Ovary (tissue), 10 donors: ENCODE measurements at regions of chr11 and their contacts with region 1.

Region 1: GRCh38 chr11:127451861-127452260 is 451.3 kb upstream of the KIRREL3 start:
- DNase-seq: peak; percentile 26 to 82 (median 57)
- H3K4me3 ChIP-seq: no peak overlapping the region
- H3K27ac ChIP-seq: no peak overlapping the region
- H3K4me1 ChIP-seq: no peaks in the 10 kb centered on the region
- H3K27me3 ChIP-seq: no peaks in the 10 kb centered on the region
- CTCF ChIP-seq: no peak
- EP300 ChIP-seq: no peak
- POLR2A ChIP-seq: no peak

Region 2: DNA sequence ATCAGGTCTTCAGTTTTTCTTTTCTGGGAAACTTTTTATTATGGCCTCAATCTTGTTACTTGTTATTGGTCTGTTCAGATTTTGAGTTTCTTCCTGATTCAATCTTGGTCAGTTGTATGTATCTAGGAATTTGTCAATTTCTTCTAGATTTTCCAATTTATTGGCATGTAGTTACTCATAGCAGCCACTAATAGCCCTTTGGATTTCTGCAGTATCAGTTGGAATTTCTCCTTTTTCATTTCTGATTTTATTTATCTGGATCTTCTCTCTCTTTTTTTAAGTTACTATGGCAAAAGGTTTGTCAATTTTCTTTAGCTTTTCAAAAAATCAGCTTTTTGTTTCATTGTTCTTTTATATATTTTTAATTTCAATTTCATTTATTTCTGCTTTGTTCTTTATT is 31.7 kb before region 1 on chr11:
- intact Hi-C with region 1: loop called in 1 of 4 experiments (anchors 1 kb)
- DNase-seq: no peak
- H3K4me3 ChIP-seq: no peak overlapping the region
- H3K27ac ChIP-seq: no peak overlapping the region
- H3K4me1 ChIP-seq: no peaks in the 10 kb centered on the region
- H3K27me3 ChIP-seq: no peaks in the 10 kb centered on the region
- CTCF ChIP-seq: no peak
- EP300 ChIP-seq: no peak
- POLR2A ChIP-seq: no peak